ENCODE measurements at regions of chr1 and their contacts with region 1.

Region 1: GRCh38 chr1:28248283-28249012 is 10.9 kb upstream of the SESN2 start:
- DNase-seq: peak; percentile 63
- H3K27ac ChIP-seq: peak overlapping the region; percentile 91
- CTCF ChIP-seq: peak; percentile 94

Region 2: DNA sequence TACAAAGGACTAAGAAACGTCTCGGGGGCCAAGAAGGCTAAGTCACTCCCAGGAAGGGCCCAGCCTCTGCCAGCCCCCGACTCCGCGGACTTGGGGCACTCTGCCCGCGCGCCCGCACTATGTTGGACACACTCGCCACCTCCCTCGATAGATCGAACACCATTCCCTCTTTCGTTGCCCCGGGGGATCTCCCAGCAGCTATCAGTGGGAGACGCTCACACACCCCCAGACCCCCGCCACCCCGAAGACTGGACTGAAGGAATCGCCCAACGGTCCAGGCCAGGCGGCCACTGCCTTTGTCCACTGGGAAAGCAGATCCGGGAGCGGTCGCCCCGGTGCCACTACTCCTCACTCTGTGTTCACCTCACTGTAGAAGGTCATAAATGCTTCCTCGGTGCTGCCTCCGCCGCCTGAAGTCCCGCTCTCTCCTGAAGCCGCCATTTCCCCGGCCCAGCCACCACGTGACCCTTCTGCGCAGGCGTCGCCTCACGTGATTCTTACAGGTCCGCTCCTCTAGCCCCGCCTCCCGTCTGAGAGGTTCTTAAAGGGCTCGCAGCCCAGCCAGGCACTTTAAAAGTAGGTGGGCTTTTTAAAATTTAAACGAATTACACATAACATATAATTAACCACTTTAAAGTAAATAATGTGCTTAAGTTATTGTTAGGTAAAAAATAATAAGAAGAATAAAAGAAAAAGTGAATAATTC is 15.7 kb before region 1 on chr1 and contains the start of gene DNAJC8:
- CTCF ChIA-PET with region 1: interaction called, 12 read pairs
- POLR2A ChIA-PET with region 1: interaction called, 3 read pairs
- DNase-seq: peak; percentile 90
- H3K27ac ChIP-seq: peak within 1 kb of the TSS; percentile 85
- CTCF ChIP-seq: no peak

Region 3: DNA sequence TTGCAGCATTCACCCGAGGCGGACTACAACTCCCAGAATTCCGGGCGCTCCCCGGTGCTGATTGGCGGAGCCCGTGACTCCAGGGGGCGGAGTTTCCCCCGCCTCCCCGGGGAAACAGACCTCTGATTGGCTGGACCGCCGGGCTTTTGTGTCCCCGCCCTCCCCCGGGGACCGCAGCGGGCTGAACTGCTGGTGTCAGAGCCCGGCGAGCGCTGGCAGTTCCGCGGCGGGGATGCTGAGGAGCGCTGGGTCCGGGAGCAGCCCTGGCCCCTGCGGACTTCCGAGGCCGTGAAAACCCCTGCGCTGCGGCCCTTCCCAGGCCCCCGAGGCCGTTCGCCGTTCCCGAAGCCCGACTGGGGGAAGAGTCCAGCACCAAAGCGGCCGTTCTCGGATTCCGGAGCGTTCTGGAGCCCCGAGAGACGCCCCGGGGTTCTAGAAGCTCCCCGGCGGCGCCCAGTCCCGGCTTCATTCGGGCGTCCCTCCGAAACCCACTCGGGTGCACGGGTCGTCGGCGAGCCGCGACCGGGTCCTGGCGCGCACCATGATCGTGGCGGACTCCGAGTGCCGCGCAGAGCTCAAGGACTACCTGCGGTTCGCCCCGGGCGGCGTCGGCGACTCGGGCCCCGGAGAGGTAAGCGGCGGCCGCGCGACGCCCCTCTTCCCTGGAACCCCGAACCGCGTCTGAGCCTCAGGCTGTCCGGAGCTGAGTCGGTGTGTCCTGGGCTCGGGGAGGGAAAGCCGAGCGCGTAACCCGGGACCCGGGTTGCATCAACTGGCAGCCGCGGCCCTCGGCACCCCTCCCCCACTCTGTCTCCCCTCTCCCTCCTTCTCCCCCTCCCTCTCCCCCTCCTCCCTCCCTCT is 11.1 kb after region 1 on chr1 and contains the start of gene SESN2:
- CTCF ChIA-PET with region 1: interaction called, 14 read pairs
- POLR2A ChIA-PET with region 1: interaction called, 7 read pairs
- DNase-seq: peak; percentile 99
- H3K27ac ChIP-seq: peak within 1 kb of the TSS; percentile 93
- CTCF ChIP-seq: no peak

Region 4: GRCh38 chr1:28540651-28541050 is 292.2 kb after region 1 on chr1:
- CTCF ChIA-PET with region 1: no interaction called
- POLR2A ChIA-PET with region 1: no interaction called
- DNase-seq: no peak
- H3K27ac ChIP-seq: peak overlapping the region; percentile 5
- CTCF ChIP-seq: 0 out of 2 replicates have a peak, but pooled peaks have one; percentile 7